ENCODE measurements at regions of chr9 and their contacts with region 1.

Region 1: DNA sequence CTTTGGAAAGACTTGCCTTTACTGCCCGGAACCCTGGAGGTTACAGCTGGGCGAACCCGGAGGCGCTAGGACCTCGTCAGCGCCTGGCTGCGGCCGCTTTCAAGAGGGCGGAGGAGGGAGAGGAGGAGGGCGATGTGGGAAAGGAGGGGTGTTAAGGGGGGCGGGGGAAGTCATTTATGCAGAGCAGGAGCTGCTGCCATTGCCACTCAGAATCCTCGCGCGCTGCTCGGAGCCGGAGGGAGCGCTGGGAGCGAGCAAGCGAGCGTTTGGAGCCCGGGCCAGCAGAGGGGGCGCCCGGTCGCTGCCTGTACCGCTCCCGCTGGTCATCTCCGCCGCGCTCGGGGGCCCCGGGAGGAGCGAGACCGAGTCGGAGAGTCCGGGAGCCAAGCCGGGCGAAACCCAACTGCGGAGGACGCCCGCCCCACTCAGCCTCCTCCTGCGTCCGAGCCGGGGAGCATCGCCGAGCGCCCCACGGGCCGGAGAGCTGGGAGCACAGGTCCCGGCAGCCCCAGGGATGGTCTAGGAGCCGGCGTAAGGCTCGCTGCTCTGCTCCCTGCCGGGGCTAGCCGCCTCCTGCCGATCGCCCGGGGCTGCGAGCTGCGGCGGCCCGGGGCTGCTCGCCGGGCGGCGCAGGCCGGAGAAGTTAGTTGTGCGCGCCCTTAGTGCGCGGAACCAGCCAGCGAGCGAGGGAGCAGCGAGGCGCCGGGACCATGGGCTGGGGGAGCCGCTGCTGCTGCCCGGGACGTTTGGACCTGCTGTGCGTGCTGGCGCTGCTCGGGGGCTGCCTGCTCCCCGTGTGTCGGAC is at the start of gene PCSK5:
- DNase-seq: peak; percentile 97
- H3K4me3 ChIP-seq: peak within 1 kb of the TSS; percentile 59 to 90 (median 70)
- H3K27ac ChIP-seq: peak within 1 kb of the TSS; percentile 90 to 93 (median 92)
- H3K4me1 ChIP-seq: peaks cover 0 to 25% (median 22%) of the 10 kb centered on the region in 4 donors
- H3K27me3 ChIP-seq: no peaks in the 10 kb centered on the region
- CTCF ChIP-seq: peak in 2 of 4 experiments; percentile 21 to 23
- EP300 ChIP-seq: peak in 1 of 4 donors; percentile 48
- POLR2A ChIP-seq: peak; percentile 79 to 91
- total RNA-seq, gene PCSK5: 8.1 to 23.5 (median 11.3) TPM

Region 2: GRCh38 chr9:75664597-75664996 is 226.1 kb before region 1 on chr9:
- intact Hi-C with region 1: no loop called
- DNase-seq: no peak
- H3K4me3 ChIP-seq: no peak overlapping the region
- H3K27ac ChIP-seq: no peak overlapping the region
- H3K4me1 ChIP-seq: no peaks in the 10 kb centered on the region
- H3K27me3 ChIP-seq: no peaks in the 10 kb centered on the region
- CTCF ChIP-seq: no peak
- EP300 ChIP-seq: no peak
- POLR2A ChIP-seq: no peak

Region 3: DNA sequence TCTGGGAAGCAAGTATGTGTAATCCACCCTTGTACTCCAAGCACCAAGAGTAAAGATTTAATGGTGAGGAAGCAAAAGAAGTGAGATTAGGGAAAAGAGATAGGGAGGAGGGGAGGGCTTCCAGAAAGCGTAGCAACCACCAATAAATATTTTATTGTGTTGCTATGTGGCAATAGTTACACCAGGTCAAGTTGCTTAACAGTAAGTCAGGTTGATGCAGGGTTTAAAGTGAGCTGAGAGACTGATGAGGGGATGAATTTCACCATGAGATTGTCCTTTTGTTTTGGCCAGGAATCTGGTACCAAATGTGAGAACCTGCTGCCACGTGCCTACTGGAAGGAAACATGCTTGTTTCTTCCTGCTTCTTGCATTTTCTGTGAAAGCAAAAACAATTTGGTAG is 62.5 kb after region 1 on chr9:
- intact Hi-C with region 1: loop called (anchors 10 kb)
- DNase-seq: no peak
- H3K4me3 ChIP-seq: no peak overlapping the region
- H3K27ac ChIP-seq: no peak overlapping the region
- H3K4me1 ChIP-seq: peaks cover 0 to 25% (median 6%) of the 10 kb centered on the region in 4 donors
- H3K27me3 ChIP-seq: no peaks in the 10 kb centered on the region
- CTCF ChIP-seq: no peak
- EP300 ChIP-seq: no peak
- POLR2A ChIP-seq: no peak

Region 4: DNA sequence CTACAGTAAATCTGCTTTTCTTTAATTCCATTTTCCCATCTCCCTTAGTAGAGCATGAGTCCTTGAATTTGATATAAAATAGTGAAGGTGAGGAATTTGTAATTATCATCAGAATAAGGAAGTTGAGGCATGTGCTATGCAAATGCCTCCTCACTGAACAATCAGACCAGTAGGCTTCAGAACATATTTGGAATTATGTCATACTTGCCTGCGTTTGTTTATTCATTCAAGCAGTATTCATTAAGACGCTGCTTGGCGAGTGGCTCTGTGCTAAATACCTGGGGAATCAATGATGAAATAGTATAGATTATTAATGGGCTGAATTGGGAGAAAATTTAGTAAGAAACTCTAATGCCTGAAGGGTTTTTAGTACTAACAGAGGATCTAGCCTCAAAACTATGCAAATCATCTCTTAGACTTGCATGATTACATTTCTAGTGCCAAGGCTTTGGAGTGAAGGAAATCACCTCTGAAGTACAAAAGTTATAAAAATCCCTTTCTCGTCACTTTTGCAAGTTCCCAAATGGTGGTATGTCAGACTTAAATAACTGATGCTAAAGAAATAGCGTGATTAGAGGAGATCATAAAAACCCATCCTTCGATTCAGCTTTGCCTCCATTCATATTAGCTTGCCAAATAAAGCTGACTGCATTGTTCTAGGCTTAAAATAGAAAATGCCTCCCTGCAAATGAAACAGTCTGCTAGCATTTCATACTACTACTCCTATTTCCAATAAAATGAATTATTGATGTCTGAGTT is 141.5 kb after region 1 on chr9:
- intact Hi-C with region 1: loop called (anchors 10 kb)
- DNase-seq: no peak
- H3K4me3 ChIP-seq: no peak overlapping the region
- H3K27ac ChIP-seq: peak overlapping the region in 2 of 4 donors; percentile 59 to 70
- H3K4me1 ChIP-seq: peaks cover 0 to 15% (median 12%) of the 10 kb centered on the region in 4 donors
- H3K27me3 ChIP-seq: no peaks in the 10 kb centered on the region
- CTCF ChIP-seq: no peak
- EP300 ChIP-seq: no peak
- POLR2A ChIP-seq: no peak

Region 5: GRCh38 chr9:76297721-76298239 is 407.1 kb after region 1 on chr9:
- intact Hi-C with region 1: loop called (anchors 5 kb)
- DNase-seq: peak; percentile 85
- H3K4me3 ChIP-seq: peak overlapping the region in 3 of 4 donors; percentile 4 to 22 (median 15)
- H3K27ac ChIP-seq: peak overlapping the region in 3 of 4 donors; percentile 60 to 70 (median 62)
- H3K4me1 ChIP-seq: peaks cover 0 to 17% (median 16%) of the 10 kb centered on the region in 4 donors
- H3K27me3 ChIP-seq: no peaks in the 10 kb centered on the region
- CTCF ChIP-seq: no peak
- EP300 ChIP-seq: no peak
- POLR2A ChIP-seq: no peak

Region 6: DNA sequence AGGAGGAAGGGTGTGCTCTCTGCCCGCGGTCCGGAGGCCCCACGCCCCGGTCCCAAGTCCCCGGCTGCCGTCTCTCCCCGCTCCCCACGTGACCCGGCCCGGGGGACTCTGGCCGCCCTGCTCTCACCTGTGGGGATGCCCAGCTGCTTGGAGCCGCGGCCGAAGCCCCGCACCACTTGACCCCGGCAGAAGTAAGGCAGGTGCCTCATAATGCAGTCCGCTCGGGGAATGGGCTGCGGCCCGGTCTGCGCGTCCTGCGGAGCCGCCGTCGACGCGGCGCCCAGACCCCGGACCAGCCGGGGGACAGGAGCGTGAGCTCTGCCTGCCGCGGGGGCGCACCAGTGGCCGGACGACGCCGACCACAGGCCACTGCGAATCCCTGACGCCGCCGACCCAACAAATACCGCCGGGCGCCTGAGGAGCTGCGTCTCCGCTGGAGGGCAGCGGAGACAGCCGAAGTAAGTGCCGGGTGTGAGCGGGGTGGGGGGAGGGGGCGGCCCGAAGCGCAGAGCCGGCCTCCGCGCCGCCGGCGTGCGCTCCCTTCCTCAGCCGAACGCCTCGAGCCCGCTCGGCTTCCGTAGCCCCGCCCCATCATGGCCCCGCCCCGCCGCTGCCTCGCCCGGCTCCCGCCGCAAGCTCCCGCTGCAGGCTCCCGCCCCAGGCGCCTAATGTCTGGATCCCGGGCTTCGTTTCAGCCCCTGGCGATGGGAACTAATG is 503.4 kb after region 1 on chr9 and contains the start of gene RFK:
- intact Hi-C with region 1: loop called (anchors 10 kb)
- DNase-seq: peak; percentile 97
- H3K4me3 ChIP-seq: peak within 1 kb of the TSS; percentile 84 to 97 (median 88)
- H3K27ac ChIP-seq: peak within 1 kb of the TSS; percentile 89 to 97 (median 93)
- H3K4me1 ChIP-seq: peaks cover 0 to 22% (median 10%) of the 10 kb centered on the region in 4 donors
- H3K27me3 ChIP-seq: no peaks in the 10 kb centered on the region
- CTCF ChIP-seq: peak in 2 of 4 experiments; percentile 19 to 54
- EP300 ChIP-seq: no peak
- POLR2A ChIP-seq: peak; percentile 59 to 67
- total RNA-seq, gene RFK: 12.9 to 23.5 (median 21.6) TPM

Measured in sigmoid colon (tissue), 7 donors.